CD14-positive monocyte (primary cell): ENCODE measurements at regions of chr6 and their contacts with region 1.

Region 1: GRCh38 chr6:107114213-107114905 is 956 bp downstream of the BEND3 start:
- DNase-seq: peak; percentile 72 to 82 (median 81)
- H3K4me3 ChIP-seq: peak overlapping the region; percentile 12 to 71 (median 65)
- H3K4me3 Mint-ChIP-seq: peak overlapping the region; percentile 82 to 83
- H3K27ac ChIP-seq: no peak overlapping the region
- H3K27ac Mint-ChIP-seq: peak overlapping the region in 2 of 7 donors; percentile 40 to 50
- H3K4me1 ChIP-seq: peaks cover 39 to 40% of the 10 kb centered on the region in 2 donors
- H3K4me1 Mint-ChIP-seq: peaks cover 38% of the 10 kb centered on the region
- H3K27me3 ChIP-seq: peaks cover 9 to 23% of the 10 kb centered on the region in 2 donors
- H3K27me3 Mint-ChIP-seq: peaks cover 19 to 26% (median 21%) of the 10 kb centered on the region in 3 donors
- CTCF ChIP-seq: peak; percentile 92

Region 2: GRCh38 chr6:107026965-107027364 is 87.4 kb before region 1 on chr6:
- intact Hi-C with region 1: loop called (anchors 5 kb)
- DNase-seq: no peak
- H3K4me3 ChIP-seq: no peak overlapping the region
- H3K4me3 Mint-ChIP-seq: no peak overlapping the region
- H3K27ac ChIP-seq: no peak overlapping the region
- H3K27ac Mint-ChIP-seq: no peak overlapping the region
- H3K4me1 ChIP-seq: peaks cover 4 to 15% of the 10 kb centered on the region in 2 donors
- H3K4me1 Mint-ChIP-seq: peaks cover 18% of the 10 kb centered on the region
- H3K27me3 ChIP-seq: no peaks in the 10 kb centered on the region
- H3K27me3 Mint-ChIP-seq: peaks cover 0 to 3% (median 2%) of the 10 kb centered on the region in 3 donors
- CTCF ChIP-seq: no peak